IMR-90 (cell line): ENCODE measurements at regions of chr6 and their contacts with region 1.

Region 1: DNA sequence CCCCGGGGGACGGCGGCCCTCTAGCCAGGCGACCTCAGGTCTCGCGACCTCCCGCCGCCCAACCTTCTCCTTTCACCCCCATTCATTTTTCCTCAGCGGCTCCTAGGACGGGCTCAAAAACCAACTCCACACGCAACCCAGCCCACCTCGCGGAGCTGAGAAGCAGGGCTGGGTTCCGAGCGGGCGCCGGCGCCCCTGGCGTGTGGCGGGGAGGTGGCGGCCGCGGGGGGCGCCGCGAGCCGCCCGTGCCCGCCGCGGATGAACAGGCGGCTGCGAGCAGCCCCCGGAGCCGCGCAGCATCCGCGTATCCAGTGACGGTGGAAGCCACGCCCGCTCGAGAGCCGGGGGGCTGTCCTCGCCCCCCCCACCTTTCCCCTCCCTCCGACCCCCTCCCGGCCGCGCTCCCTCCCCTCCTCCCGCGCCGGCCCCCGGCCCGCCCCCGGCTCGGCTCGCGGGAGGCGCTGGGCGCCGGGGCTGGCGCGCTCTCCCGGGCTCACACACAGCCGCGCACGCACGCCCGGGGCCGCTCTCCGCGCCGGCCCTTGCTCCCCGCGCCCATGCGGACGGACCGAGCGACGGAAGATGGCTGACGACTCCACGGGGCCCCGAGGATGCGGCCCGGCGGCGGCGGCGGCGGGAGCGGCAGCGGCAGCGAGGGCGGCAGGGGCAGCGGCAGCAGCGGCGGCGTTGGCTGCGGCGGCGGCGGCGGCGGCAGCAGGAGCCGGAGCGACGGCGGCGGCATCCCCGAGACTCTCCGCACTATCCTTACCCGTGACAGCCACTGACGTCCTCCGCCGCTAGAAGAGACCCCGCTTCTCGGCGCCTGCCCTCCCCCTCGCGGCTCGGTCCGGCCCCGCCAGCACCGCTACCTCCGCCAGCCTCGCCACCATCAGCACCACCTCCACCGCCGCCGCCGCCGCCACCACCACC is at the start of gene SOBP:
- DNase-seq: peak; percentile 47
- ATAC-seq: peak; percentile 69
- H3K4me3 ChIP-seq: peak within 1 kb of the TSS; percentile 93
- H3K27ac ChIP-seq: peak within 1 kb of the TSS; percentile 39
- H3K4me1 ChIP-seq: no peaks in the 10 kb centered on the region; the same call in 1 of the 2 replicates
- H3K27me3 ChIP-seq: peaks cover 15% of the 10 kb centered on the region
- CTCF ChIP-seq: no peak
- POLR2A ChIP-seq: no peak
- RAD21 ChIP-seq: no peak
- total RNA-seq, gene SOBP: 0.72 and 1.1 TPM in 2 replicates

Region 2: GRCh38 chr6:107124934-107125348 is 365.0 kb before region 1 on chr6:
- CTCF ChIA-PET with region 1: no interaction called
- POLR2A ChIA-PET with region 1: no interaction called
- dilution Hi-C with region 1: no loop called
- in situ Hi-C with region 1: loop called (anchors 10 kb)
- intact Hi-C with region 1: no loop called
- DNase-seq: no peak
- ATAC-seq: no peak
- H3K4me3 ChIP-seq: no peak overlapping the region
- H3K27ac ChIP-seq: no peak overlapping the region
- H3K4me1 ChIP-seq: no peaks in the 10 kb centered on the region
- H3K27me3 ChIP-seq: no peaks in the 10 kb centered on the region
- CTCF ChIP-seq: no peak
- POLR2A ChIP-seq: no peak
- RAD21 ChIP-seq: no peak

Region 3: DNA sequence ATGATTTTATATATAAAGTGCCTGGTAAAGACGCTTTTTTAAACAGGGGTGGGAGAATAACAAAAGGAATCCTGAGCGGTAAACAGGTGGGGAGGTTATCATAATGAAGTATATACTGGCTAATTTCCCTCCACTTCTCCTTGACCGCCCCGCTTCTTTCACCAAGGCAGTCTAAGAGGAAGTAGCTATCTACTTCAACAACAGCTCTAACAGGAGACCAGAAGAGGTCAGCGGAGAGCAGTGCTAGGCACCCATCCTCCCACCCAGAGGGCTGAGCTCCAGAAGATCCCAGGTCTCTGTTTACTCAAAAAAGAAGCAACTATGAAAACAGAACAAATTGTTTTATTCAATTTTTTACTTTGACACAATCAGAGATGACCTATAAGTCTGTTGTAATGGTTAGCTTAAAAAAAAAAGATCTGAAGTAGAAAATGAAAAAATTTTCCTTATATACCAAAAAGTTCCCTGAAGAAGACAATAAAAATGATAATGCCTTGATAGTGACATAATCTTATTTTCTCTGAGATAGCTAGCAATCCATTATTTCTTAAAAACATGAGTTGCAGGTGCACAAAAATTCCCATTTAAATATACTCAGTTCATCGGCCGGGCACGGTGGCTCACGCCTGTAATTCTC is 171.7 kb before region 1 on chr6:
- CTCF ChIA-PET with region 1: interaction called, 25 read pairs
- POLR2A ChIA-PET with region 1: no interaction called
- dilution Hi-C with region 1: no loop called
- in situ Hi-C with region 1: no loop called
- intact Hi-C with region 1: loop called (anchors 2 kb)
- DNase-seq: peak; percentile 63
- ATAC-seq: peak; percentile 99
- H3K4me3 ChIP-seq: no peak overlapping the region
- H3K27ac ChIP-seq: no peak overlapping the region
- H3K4me1 ChIP-seq: peaks cover 1% of the 10 kb centered on the region; the same call in 1 of the 2 replicates
- H3K27me3 ChIP-seq: no peaks in the 10 kb centered on the region
- CTCF ChIP-seq: peak; percentile 72
- POLR2A ChIP-seq: no peak
- RAD21 ChIP-seq: peak; percentile 77

Region 4: DNA sequence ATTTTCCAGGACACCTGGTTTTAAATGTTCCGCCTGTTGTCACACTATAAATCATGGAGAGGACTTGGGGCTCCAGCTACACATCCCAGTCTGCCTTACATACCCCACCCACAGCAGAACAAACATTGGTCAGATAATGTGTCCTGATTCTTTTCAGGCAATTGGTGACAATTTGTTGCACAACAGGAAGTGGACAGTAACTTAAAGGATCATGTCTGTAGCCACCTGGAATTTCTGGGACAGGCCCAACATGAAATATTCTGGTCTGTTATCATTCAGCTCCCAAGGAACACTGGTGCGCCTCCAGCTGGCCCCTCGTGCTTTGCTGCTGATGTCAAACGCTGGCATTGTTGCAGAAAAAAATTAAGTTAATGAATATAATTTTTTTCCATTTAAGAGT is 117.2 kb after region 1 on chr6:
- CTCF ChIA-PET with region 1: no interaction called
- POLR2A ChIA-PET with region 1: no interaction called
- dilution Hi-C with region 1: no loop called
- in situ Hi-C with region 1: no loop called
- intact Hi-C with region 1: no loop called
- DNase-seq: no peak
- ATAC-seq: no peak
- H3K4me3 ChIP-seq: no peak overlapping the region
- H3K27ac ChIP-seq: no peak overlapping the region
- H3K4me1 ChIP-seq: no peaks in the 10 kb centered on the region
- H3K27me3 ChIP-seq: no peaks in the 10 kb centered on the region
- CTCF ChIP-seq: no peak
- POLR2A ChIP-seq: no peak
- RAD21 ChIP-seq: no peak

Region 5: GRCh38 chr6:107657755-107658461 is 168.0 kb after region 1 on chr6:
- CTCF ChIA-PET with region 1: no interaction called
- POLR2A ChIA-PET with region 1: no interaction called
- dilution Hi-C with region 1: no loop called
- in situ Hi-C with region 1: no loop called
- intact Hi-C with region 1: loop called (anchors 1 kb)
- DNase-seq: peak; percentile 86
- ATAC-seq: peak; percentile 90
- H3K4me3 ChIP-seq: peak overlapping the region; percentile 4; the same call in 1 of the 2 replicates
- H3K27ac ChIP-seq: peak overlapping the region; percentile 79
- H3K4me1 ChIP-seq: peaks cover 27% of the 10 kb centered on the region
- H3K27me3 ChIP-seq: no peaks in the 10 kb centered on the region
- CTCF ChIP-seq: peak; percentile 48
- POLR2A ChIP-seq: no peak
- RAD21 ChIP-seq: peak; percentile 43

Region 6: DNA sequence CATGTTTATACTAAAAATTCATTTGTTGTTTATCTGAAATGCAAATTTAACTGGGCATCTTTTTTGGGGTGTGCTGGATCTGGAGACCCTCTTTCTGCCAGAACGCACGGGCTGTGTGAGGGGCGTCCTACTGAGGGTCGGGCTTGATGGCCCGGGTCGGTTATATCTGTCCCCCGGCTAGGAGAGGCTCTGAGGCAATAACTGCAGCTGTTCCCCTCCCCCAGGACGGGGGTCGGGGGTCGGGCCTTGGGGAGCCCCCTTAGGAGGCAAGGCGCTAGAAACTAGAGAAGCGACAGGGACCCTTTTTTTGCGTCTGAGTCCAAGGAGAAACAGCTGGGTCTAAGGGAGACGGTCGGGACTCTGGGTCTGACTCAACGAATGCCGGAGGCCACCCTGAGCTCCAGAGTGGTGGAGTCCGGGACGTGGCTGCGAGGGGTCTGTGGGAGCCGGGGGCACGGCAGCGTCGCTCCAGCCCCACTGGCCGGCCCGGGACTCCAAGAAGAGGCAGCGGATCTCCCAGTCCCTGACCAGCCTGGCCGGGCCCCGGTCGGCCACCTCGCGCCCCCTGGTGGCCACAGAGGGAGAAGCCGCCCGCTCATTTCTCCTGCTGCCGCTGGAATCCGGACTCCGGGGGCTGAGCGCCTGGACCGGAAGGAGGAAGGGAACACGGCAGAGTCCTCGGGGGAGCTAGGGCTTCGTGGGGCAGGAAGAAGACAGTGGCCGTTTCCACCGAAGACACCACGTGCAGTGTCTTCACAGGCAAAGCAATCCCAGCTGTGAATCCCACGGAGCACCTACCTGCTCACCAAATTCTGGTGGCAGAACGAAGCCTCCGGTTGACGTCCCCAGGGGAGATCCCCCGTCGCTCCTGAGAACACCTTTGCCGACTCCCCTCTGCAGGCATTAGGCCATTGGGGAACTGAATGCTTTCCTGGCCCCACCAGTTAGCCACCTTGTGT is 358.2 kb after region 1 on chr6:
- CTCF ChIA-PET with region 1: no interaction called
- POLR2A ChIA-PET with region 1: no interaction called
- dilution Hi-C with region 1: no loop called
- in situ Hi-C with region 1: loop called (anchors 10 kb)
- intact Hi-C with region 1: loop called (anchors 5 kb)
- DNase-seq: peak; percentile 63
- ATAC-seq: peak; percentile 100
- H3K4me3 ChIP-seq: peak overlapping the region; percentile 47
- H3K27ac ChIP-seq: no peak overlapping the region
- H3K4me1 ChIP-seq: no peaks in the 10 kb centered on the region
- H3K27me3 ChIP-seq: peaks cover 7% of the 10 kb centered on the region
- CTCF ChIP-seq: peak; percentile 93
- POLR2A ChIP-seq: no peak
- RAD21 ChIP-seq: peak; percentile 79